ENCODE measurements at regions of chr19 and their contacts with region 1.

Region 1: DNA sequence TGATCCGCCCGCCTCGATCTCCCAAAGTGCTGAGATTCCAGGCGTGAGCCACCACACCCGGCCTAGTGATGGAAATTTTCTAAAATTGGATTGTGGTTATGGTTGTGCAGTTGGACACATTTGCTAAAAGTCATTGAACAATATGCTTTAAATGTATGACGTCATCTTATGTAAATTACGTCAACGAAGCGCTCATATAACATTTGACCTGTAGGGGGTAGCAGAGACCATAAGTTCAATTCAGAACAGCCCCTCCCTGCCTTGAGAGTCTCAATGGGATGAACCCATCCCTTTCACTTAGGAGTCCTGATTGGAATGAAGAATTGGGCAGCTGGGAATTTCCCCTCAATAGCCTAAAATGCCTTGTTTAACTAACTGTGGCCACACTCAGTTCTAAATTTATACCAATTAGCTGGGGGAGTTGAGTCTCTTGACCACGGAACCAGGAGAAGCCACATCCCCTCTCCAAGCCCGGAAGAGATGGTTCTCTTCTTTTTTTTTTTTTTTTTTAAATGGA is 15.3 kb upstream of the TLE6 start:
- DNase-seq: peak; percentile 86 to 91 (median 87)
- H3K4me3 ChIP-seq: peak overlapping the region in 2 of 7 experiments; percentile 58 to 74
- H3K27ac ChIP-seq: no peak overlapping the region
- H3K4me1 ChIP-seq: peaks cover 0 to 3% (median 0%) of the 10 kb centered on the region in 4 experiments
- H3K27me3 ChIP-seq: no peaks in the 10 kb centered on the region

Region 2: GRCh38 chr19:3053218-3053699 is 91.2 kb after region 1 on chr19:
- CTCF ChIA-PET with region 1: interaction called, 12 read pairs
- POLR2A ChIA-PET with region 1: no interaction called
- DNase-seq: no peak
- H3K4me3 ChIP-seq: no peak overlapping the region
- H3K27ac ChIP-seq: no peak overlapping the region
- H3K4me1 ChIP-seq: peaks cover 0 to under 1% (median 0%) of the 10 kb centered on the region in 4 experiments
- H3K27me3 ChIP-seq: no peaks in the 10 kb centered on the region